ENCODE measurements at regions of chr2 and their contacts with region 1.

Region 1: DNA sequence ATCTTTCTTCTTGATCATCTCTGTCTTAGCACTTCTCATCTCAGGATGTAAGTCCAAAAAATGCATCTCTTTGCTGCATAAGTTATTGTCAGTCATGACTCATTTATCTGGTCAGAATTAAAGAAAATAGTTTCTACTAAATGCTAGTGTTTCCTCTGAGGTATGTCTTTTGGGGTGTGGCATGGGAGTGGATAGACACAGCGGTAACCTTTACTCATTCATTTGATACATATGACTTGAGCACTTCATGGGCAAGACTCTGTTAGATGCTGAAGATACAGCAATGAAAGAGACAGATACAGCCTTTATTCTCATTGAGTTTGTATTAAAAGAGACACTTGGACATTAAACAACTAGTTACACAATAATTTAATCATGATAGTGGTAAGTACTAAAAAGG is 284.7 kb downstream of the IRS1 start:
- DNase-seq: no peak
- ATAC-seq: peak; percentile 38
- H3K4me3 ChIP-seq: no peak overlapping the region
- H3K27ac ChIP-seq: peak overlapping the region; percentile 89
- H3K4me1 ChIP-seq: peaks cover 35% of the 10 kb centered on the region
- H3K27me3 ChIP-seq: no peaks in the 10 kb centered on the region
- CTCF ChIP-seq: no peak
- EP300 ChIP-seq: no peak
- POLR2A ChIP-seq: no peak
- RAD21 ChIP-seq: 0 out of 2 replicates have a peak, but pooled peaks have one; percentile 10

Region 2: GRCh38 chr2:226478109-226478809 is 36.7 kb before region 1 on chr2:
- CTCF ChIA-PET with region 1: no interaction called
- POLR2A ChIA-PET with region 1: interaction called, 4 read pairs
- in situ Hi-C with region 1: no loop called
- intact Hi-C with region 1: loop called (anchors 2 kb)
- DNase-seq: peak; percentile 89
- ATAC-seq: peak; percentile 99
- H3K4me3 ChIP-seq: peak overlapping the region; percentile 0 to 6 (median 5); a peak in 3 of 6 replicates
- H3K27ac ChIP-seq: peak overlapping the region; percentile 57
- H3K4me1 ChIP-seq: peaks cover 26% of the 10 kb centered on the region
- H3K27me3 ChIP-seq: no peaks in the 10 kb centered on the region
- CTCF ChIP-seq: 0 out of 2 replicates have a peak, but pooled peaks have one; percentile 12
- EP300 ChIP-seq: peak in 1 of 2 experiments; percentile 58; a peak in 2 of 4 replicates
- POLR2A ChIP-seq: peak; percentile 29 to 47; a peak in 2 of 4 replicates
- RAD21 ChIP-seq: no peak